ENCODE measurements at regions of chr19 and their contacts with region 1.

Region 1: GRCh38 chr19:18117692-18118378 is 20.3 kb downstream of the MAST3 start:
- DNase-seq: no peak
- H3K4me3 ChIP-seq: peak overlapping the region; percentile 65 to 67
- H3K27ac ChIP-seq: peak overlapping the region; percentile 71
- H3K4me1 ChIP-seq: peaks cover 21% of the 10 kb centered on the region
- H3K27me3 ChIP-seq: no peaks in the 10 kb centered on the region
- CTCF ChIP-seq: no peak
- POLR2A ChIP-seq: no peak

Region 2: DNA sequence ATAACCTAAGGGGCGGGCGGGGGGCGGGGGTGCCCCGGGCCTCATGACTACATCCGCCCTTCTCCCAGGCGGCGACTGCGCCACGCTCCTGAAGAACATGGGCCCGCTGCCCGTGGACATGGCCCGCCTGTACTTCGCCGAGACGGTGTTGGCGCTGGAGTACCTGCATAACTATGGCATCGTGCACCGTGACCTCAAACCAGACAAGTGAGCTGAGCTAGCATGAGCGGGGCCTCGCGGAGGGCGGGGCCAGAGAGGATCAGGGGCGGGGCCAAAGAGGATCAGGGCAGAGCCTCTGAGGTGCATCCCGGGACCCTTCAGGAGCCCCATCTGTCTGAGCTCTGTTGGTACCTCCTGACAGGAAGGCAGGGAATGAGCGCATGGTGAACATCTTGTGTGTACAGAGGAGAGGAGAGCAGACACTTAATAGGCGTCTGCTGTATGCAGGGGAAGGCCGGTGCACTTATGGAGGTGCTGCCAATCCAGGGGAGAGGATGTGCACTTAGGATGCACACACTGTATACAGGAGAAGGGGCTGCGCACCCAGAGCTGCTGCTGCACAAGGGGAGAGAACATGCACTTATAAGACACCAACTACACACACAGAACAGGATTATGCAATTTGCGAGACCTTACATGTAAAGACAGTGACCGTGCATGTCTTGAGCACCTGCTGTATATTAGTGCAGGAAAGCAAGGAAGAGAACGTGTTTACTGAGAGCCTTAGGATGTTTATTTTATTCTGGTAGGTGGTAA is 14.2 kb after region 1 on chr19:
- intact Hi-C with region 1: no loop called
- DNase-seq: no peak
- H3K4me3 ChIP-seq: no peak overlapping the region
- H3K27ac ChIP-seq: no peak overlapping the region
- H3K4me1 ChIP-seq: no peaks in the 10 kb centered on the region
- H3K27me3 ChIP-seq: no peaks in the 10 kb centered on the region
- CTCF ChIP-seq: no peak
- POLR2A ChIP-seq: no peak

Region 3: DNA sequence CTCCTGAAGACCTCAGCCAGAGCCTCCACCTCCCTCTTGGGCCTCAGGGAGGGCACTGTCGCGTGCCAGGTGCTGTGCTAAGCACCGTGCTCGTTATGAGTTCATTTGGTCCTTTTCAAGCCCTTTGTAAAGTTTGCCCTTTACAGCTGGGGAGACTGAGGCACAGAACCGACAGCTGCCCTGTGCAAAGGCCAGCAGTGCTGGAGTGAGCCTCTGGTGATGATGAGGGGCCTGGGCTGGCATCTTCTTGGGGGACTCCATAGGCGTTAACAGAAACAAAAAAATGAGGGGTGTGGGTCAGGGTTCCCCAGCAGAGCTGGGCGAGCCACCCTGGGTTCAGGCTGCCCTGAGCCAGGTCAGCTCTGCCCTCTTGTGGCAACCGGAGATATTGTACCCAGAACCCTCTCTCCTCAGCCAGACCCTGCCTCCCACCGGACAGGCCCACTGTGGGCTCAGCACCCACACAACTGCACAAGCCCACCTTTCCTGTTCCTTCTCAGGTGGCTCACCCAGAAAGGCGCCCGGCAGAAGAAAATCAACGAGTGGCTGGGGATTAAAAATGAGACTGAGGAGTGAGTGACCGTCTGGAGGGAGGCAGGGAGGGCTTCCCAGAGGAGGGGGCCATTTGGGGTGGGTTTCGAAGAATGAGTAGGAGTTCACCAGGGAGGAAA is 50.3 kb after region 1 on chr19:
- intact Hi-C with region 1: loop called (anchors 5 kb)
- DNase-seq: peak in 1 of 2 donors; percentile 67
- H3K4me3 ChIP-seq: no peak overlapping the region
- H3K27ac ChIP-seq: no peak overlapping the region
- H3K4me1 ChIP-seq: peaks cover 2% of the 10 kb centered on the region
- H3K27me3 ChIP-seq: no peaks in the 10 kb centered on the region
- CTCF ChIP-seq: peak; percentile 43 to 62 (median 50)
- POLR2A ChIP-seq: no peak

Region 4: DNA sequence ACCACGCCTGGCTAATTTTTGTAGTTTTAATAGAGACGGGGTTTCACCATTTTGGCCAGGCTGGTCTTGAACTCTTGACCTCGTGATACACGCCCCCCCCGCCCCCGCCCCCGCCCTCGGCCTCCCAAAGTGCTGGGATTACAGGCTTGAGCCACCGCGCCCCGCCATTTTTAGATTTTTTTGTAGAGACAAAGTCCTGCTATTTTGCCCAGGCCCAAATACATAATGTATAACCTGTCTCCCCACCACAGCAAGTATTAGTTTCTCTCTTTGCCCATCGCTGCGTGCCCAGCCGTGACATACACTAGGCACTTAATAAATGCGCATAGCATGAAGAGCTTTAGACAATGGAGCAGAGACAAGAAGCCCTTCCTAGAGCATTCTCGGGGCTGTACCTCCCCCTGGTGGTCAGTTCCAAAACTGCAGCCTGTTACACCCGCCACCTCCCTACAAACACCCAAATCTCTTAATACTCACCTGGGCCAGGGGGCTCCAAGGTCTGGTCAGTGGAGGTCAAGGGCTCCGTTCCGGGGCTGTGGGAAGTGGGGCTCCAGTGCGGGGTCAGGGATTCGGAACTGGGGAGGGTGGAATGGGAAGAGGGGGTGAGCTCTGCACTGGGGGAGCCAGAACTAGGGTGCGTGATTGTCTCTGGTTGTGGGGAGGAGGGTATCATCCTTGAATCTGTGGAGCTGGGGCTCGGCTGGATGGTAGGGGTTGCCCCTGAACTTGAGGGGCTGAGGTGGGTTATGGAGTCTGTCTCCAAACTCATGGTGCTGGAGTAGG is 133.9 kb after region 1 on chr19:
- intact Hi-C with region 1: loop called (anchors 5 kb)
- DNase-seq: no peak
- H3K4me3 ChIP-seq: no peak overlapping the region
- H3K27ac ChIP-seq: no peak overlapping the region
- H3K4me1 ChIP-seq: no peaks in the 10 kb centered on the region
- H3K27me3 ChIP-seq: no peaks in the 10 kb centered on the region
- CTCF ChIP-seq: peak; percentile 95 to 98 (median 97)
- POLR2A ChIP-seq: no peak

Region 5: GRCh38 chr19:18339723-18340122 is 221.9 kb after region 1 on chr19:
- intact Hi-C with region 1: loop called (anchors 10 kb)
- DNase-seq: no peak
- H3K4me3 ChIP-seq: peak overlapping the region; percentile 85
- H3K27ac ChIP-seq: peak overlapping the region; percentile 92
- H3K4me1 ChIP-seq: peaks cover 18% of the 10 kb centered on the region
- H3K27me3 ChIP-seq: no peaks in the 10 kb centered on the region
- CTCF ChIP-seq: no peak
- POLR2A ChIP-seq: no peak